Colonic mucosa (tissue), 4 donors: ENCODE measurements at regions of chr10 and their contacts with region 1.

Region 1: GRCh38 chr10:27319752-27320561 is 79.4 kb upstream of the ACBD5 start:
- DNase-seq: peak; percentile 32
- H3K4me3 ChIP-seq: peak overlapping the region; percentile 8
- H3K27ac ChIP-seq: no peak overlapping the region
- H3K4me1 ChIP-seq: no peaks in the 10 kb centered on the region
- H3K27me3 ChIP-seq: no peaks in the 10 kb centered on the region
- CTCF ChIP-seq: no peak

Region 2: DNA sequence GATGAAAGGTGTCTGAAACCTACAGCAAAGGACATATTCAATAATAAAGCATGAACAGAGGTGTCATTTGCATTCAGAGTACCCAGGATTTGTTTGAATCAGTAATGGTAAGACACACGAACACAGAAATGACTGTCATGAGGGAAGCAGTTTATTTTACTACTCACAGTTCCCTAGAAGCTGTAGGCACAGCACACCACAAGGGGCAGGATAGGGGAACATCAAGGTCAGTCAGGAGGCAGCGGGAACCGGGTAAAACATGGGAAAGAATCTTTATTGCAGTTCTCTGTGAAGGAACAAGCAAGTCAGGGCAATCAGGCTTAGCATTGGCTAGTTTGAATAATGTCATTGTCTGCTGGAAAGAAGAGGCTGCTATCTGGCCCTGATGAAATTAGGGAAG is 692.6 kb before region 1 on chr10:
- intact Hi-C with region 1: loop called (anchors 5 kb)
- DNase-seq: no peak
- H3K4me3 ChIP-seq: no peak overlapping the region
- H3K27ac ChIP-seq: no peak overlapping the region
- H3K4me1 ChIP-seq: no peaks in the 10 kb centered on the region
- H3K27me3 ChIP-seq: no peaks in the 10 kb centered on the region
- CTCF ChIP-seq: no peak

Region 3: GRCh38 chr10:27223964-27224363 is 96.0 kb before region 1 on chr10:
- intact Hi-C with region 1: no loop called
- DNase-seq: peak; percentile 42
- H3K4me3 ChIP-seq: no peak overlapping the region
- H3K27ac ChIP-seq: no peak overlapping the region
- H3K4me1 ChIP-seq: no peaks in the 10 kb centered on the region
- H3K27me3 ChIP-seq: no peaks in the 10 kb centered on the region
- CTCF ChIP-seq: peak; percentile 51